ENCODE measurements at regions of chr11 and their contacts with region 1.

Region 1: DNA sequence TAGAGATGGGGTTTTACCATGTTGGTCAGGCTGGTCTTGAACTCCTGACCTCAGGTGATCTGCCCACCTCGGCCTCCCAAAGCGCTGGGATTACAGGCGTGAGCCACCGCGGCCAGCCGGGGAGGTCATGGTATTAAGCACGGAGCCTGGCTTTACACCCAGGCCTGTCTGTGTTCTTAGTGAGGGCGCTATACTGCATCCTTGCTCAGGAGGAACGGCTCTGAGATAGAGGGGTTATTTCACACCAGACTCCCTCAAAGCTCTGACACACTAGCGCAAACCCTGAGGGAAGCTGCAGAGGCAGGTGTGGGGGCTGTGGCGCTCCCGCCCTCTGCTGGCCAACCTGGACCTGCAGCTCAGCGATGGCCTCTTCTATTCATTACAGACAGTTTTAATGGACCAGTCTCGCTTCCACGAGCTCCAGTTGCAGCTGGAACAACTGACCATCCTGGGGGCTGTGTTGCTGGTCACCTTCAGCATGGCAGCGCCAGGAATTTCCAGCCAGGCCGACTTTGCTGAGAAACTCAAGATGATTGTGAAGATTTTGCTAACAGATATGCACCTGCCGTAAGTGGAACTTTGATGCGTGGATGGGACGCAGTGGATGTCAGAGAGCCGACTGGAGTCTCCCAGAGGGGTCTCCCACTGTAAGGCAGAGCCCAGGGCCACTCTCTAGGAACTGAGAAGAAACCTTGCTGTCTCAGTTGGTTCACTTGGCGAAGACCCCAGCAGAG is 26.2 kb downstream of the TCP11L1 start:
- DNase-seq: peak; percentile 54 to 76
- ATAC-seq: peak; percentile 79 to 95 (median 88)
- H3K4me3 ChIP-seq: no peak overlapping the region
- H3K27ac ChIP-seq: no peak overlapping the region
- H3K4me1 ChIP-seq: no peaks in the 10 kb centered on the region
- H3K27me3 ChIP-seq: no peaks in the 10 kb centered on the region
- CTCF ChIP-seq: peak; percentile 81

Region 2: GRCh38 chr11:32809313-32809712 is 256.3 kb before region 1 on chr11:
- intact Hi-C with region 1: loop called in 1 of 2 experiments (anchors 10 kb)
- DNase-seq: peak in 1 of 2 donors; percentile 38
- ATAC-seq: peak in 2 of 4 donors; percentile 59 to 68
- H3K4me3 ChIP-seq: no peak overlapping the region
- H3K27ac ChIP-seq: no peak overlapping the region
- H3K4me1 ChIP-seq: no peaks in the 10 kb centered on the region
- H3K27me3 ChIP-seq: no peaks in the 10 kb centered on the region
- CTCF ChIP-seq: peak; percentile 45

Region 3: GRCh38 chr11:32960553-32961164 is 105.0 kb before region 1 on chr11:
- intact Hi-C with region 1: loop called (anchors 2 kb)
- DNase-seq: no peak
- ATAC-seq: peak in 1 of 4 donors; percentile 67
- H3K4me3 ChIP-seq: no peak overlapping the region
- H3K27ac ChIP-seq: no peak overlapping the region
- H3K4me1 ChIP-seq: no peaks in the 10 kb centered on the region
- H3K27me3 ChIP-seq: no peaks in the 10 kb centered on the region
- CTCF ChIP-seq: peak; percentile 77

Region 4: GRCh38 chr11:32983506-32983905 is 82.1 kb before region 1 on chr11:
- intact Hi-C with region 1: no loop called
- DNase-seq: no peak
- ATAC-seq: no peak
- H3K4me3 ChIP-seq: no peak overlapping the region
- H3K27ac ChIP-seq: no peak overlapping the region
- H3K4me1 ChIP-seq: no peaks in the 10 kb centered on the region
- H3K27me3 ChIP-seq: no peaks in the 10 kb centered on the region
- CTCF ChIP-seq: no peak